IMR-90 (cell line): ENCODE measurements at regions of chr12 and their contacts with region 1.

Region 1: DNA sequence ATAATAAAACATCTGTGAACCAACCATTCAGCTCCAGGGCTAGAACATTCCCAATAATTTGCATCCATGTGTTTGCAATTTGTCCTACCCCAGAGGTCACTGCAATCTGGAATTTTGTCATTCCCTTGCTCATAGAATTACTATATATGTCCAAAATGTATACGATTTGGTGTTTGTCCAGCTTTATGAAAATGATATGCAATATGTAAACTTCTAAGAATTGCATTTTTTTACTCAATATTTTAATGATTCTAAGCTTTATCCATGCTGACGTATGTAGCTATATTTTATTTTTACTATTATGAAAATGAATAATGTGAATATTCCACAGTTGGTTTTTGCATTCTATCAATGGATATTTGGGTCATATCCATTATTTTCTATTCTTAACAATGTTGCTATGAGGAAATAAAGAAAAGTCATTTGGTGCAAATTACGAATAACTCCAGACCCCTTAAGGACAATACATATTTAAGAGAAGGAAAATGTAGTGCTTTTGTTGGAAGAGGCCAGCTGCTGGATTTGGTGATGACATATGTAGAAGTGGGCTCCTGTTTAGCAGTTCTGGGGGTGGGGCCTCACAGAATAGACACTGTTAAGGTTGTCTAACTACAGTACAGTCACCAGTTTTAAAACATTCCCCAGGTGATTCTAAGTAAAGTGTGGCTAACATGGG is 139.4 kb downstream of the SLC38A4 start:
- DNase-seq: no peak
- ATAC-seq: no peak
- H3K4me3 ChIP-seq: no peak overlapping the region
- H3K27ac ChIP-seq: no peak overlapping the region
- H3K4me1 ChIP-seq: no peaks in the 10 kb centered on the region
- H3K27me3 ChIP-seq: no peaks in the 10 kb centered on the region
- CTCF ChIP-seq: no peak
- POLR2A ChIP-seq: no peak
- RAD21 ChIP-seq: no peak

Region 2: GRCh38 chr12:46722394-46723185 is 36.2 kb after region 1 on chr12:
- CTCF ChIA-PET with region 1: no interaction called
- POLR2A ChIA-PET with region 1: no interaction called
- dilution Hi-C with region 1: no loop called
- in situ Hi-C with region 1: no loop called
- intact Hi-C with region 1: loop called (anchors 1 kb)
- DNase-seq: peak; percentile 63
- ATAC-seq: no peak
- H3K4me3 ChIP-seq: no peak overlapping the region
- H3K27ac ChIP-seq: no peak overlapping the region
- H3K4me1 ChIP-seq: no peaks in the 10 kb centered on the region; the same call in 1 of the 2 replicates
- H3K27me3 ChIP-seq: no peaks in the 10 kb centered on the region; the same call in 1 of the 2 replicates
- CTCF ChIP-seq: no peak
- POLR2A ChIP-seq: no peak
- RAD21 ChIP-seq: no peak

Region 3: DNA sequence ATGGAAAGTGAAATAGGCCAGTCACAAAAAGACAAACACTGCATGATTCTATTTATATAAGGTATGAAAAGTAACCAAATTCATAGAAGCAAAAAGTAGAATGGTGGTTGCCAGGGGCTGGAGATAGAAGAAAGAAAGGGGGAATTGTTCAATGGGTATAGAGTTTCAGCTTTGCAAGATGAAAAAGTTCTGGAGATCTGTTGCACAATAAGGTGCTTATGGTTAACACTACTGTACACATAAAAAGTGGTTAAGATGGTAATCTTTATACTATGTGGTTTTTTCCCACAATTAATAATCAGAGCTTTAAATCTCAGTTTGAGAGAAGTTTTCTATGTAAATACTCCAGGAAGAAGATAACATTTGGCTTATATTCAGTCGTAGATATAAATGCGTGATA is 66.0 kb after region 1 on chr12:
- CTCF ChIA-PET with region 1: no interaction called
- POLR2A ChIA-PET with region 1: no interaction called
- dilution Hi-C with region 1: no loop called
- in situ Hi-C with region 1: no loop called
- intact Hi-C with region 1: loop called (anchors 5 kb)
- DNase-seq: peak; percentile 26
- ATAC-seq: no peak
- H3K4me3 ChIP-seq: no peak overlapping the region
- H3K27ac ChIP-seq: no peak overlapping the region
- H3K4me1 ChIP-seq: no peaks in the 10 kb centered on the region
- H3K27me3 ChIP-seq: no peaks in the 10 kb centered on the region
- CTCF ChIP-seq: no peak
- POLR2A ChIP-seq: no peak
- RAD21 ChIP-seq: no peak